Dendritic cell treated with granulocyte-macrophage colony-stimulating factor and Interleukin-4, amounts not matched to agents 40 ng/mL and 50 ng/mL, for 4 days (primary cell): ENCODE measurements at regions of chr3 and their contacts with region 1.

Region 1: DNA sequence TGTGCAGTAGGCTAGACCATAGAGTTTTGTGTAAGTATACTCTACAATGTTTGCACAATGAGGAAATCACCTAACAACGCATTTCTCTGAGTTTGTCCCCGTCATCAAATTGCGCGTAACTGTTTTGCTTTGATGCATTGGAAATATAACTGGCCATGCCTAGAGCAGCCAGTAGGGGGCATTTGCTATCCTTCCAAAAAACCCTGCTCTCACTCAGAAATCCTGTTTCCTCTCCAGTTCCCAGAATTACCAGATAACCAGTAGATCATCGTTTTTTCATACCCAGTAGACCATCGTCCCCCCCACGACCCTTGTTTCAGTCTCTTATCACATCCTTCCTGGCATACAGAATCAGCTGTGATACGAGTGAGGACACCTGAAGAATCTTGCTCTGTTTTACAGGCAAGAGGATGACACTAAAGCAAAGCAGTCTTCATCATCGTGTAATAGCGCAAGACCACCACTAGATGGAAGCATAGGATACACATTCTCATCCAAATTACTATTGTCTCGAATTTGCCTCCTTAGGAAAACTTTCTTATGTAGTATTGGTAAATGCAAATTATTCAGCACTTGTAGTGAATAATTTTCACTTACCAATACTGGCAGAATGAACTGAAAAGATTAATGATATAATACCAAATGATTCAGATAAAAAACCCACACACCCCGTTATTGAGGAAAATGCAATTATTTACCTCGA is 4.4 kb upstream of the GABRR3 start:
- H3K4me3 Mint-ChIP-seq: peak overlapping the region; percentile 71
- H3K27ac Mint-ChIP-seq: no peak overlapping the region
- H3K4me1 Mint-ChIP-seq: peaks cover 5% of the 10 kb centered on the region
- H3K27me3 Mint-ChIP-seq: peaks cover 10% of the 10 kb centered on the region

Region 2: GRCh38 chr3:97504463-97504862 is 535.0 kb before region 1 on chr3:
- intact Hi-C with region 1: no loop called
- H3K4me3 Mint-ChIP-seq: no peak overlapping the region
- H3K27ac Mint-ChIP-seq: no peak overlapping the region
- H3K4me1 Mint-ChIP-seq: no peaks in the 10 kb centered on the region
- H3K27me3 Mint-ChIP-seq: no peaks in the 10 kb centered on the region

Region 3: GRCh38 chr3:98188545-98188944 is 149.1 kb after region 1 on chr3:
- intact Hi-C with region 1: loop called (anchors 5 kb)
- H3K4me3 Mint-ChIP-seq: no peak overlapping the region
- H3K27ac Mint-ChIP-seq: no peak overlapping the region
- H3K4me1 Mint-ChIP-seq: peaks cover 5% of the 10 kb centered on the region
- H3K27me3 Mint-ChIP-seq: peaks cover 6% of the 10 kb centered on the region

Region 4: DNA sequence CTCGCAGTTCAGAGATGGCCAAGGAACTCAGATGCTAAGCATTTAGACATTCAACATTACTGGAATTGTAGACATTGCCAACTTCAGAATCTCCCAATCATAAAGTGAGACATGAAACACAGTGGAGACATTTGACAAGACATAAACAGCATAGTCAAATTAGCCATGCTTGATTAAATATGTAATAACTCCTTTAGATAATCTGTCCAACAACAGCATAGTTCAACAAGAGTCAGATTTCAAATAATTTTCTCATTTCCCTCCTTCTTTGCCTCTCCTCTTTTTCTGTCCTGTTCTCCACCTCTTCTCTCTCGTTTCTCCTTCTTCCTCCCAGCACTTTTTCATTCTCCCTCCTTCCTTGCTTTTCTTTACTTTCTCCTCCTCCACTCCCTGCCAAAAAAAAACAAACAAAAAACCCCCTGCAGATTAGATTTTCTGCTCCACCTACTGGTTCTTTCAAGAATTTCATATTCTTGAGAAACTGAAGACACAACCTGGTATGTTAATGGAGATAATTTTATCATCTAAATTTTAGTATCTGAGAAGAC is 533.8 kb after region 1 on chr3:
- intact Hi-C with region 1: loop called (anchors 10 kb)
- H3K4me3 Mint-ChIP-seq: no peak overlapping the region
- H3K27ac Mint-ChIP-seq: no peak overlapping the region
- H3K4me1 Mint-ChIP-seq: peaks cover 16% of the 10 kb centered on the region
- H3K27me3 Mint-ChIP-seq: no peaks in the 10 kb centered on the region